Activated CD4-positive, alpha-beta T cell treated with anti-CD3 and anti-CD28 coated beads for 36 hours (primary cell): ENCODE measurements at regions of chr11 and their contacts with region 1.

Region 1: GRCh38 chr11:133956650-133957633 is at the start of gene IGSF9B:
- DNase-seq: peak; percentile 95
- ATAC-seq: peak; percentile 91
- H3K4me3 Mint-ChIP-seq: peak within 1 kb of the TSS; percentile 90
- H3K27ac Mint-ChIP-seq: peak within 1 kb of the TSS; percentile 87
- H3K4me1 Mint-ChIP-seq: peaks cover 49% of the 10 kb centered on the region
- H3K27me3 Mint-ChIP-seq: peaks cover 9% of the 10 kb centered on the region
- total RNA-seq, gene IGSF9B: 79.0 to 84.2 TPM

Region 2: GRCh38 chr11:134033696-134034491 is 77.0 kb after region 1 on chr11:
- CTCF ChIA-PET with region 1: interaction called, 4 read pairs
- POLR2A ChIA-PET with region 1: no interaction called
- intact Hi-C with region 1: loop called (anchors 1 to 2 kb)
- DNase-seq: peak; percentile 84
- ATAC-seq: peak; percentile 91
- H3K4me3 Mint-ChIP-seq: no peak overlapping the region
- H3K27ac Mint-ChIP-seq: peak overlapping the region; percentile 7
- H3K4me1 Mint-ChIP-seq: peaks cover 54% of the 10 kb centered on the region
- H3K27me3 Mint-ChIP-seq: peaks cover 4% of the 10 kb centered on the region